Activated naive CD8-positive, alpha-beta T cell treated with anti-CD3 and anti-CD28 coated beads, Interleukin-2, amount 10 ng/mL, durations not matched to agents 7 days and 5 days (primary cell): ENCODE measurements at regions of chr12 and their contacts with region 1.

Region 1: GRCh38 chr12:55817346-55818139 is at the starts of genes ORMDL2 and SARNP:
- DNase-seq: peak; percentile 88
- ATAC-seq: peak; percentile 96
- H3K4me3 Mint-ChIP-seq: no peak within 1 kb of the TSS
- H3K27ac Mint-ChIP-seq: no peak within 1 kb of the TSS
- H3K4me1 Mint-ChIP-seq: peaks cover 35% of the 10 kb centered on the region
- H3K27me3 Mint-ChIP-seq: no peaks in the 10 kb centered on the region
- total RNA-seq, gene ORMDL2: 43.4 to 45.4 TPM
- total RNA-seq, gene SARNP: 80.6 to 82.4 TPM

Region 2: GRCh38 chr12:55582066-55582465 is 235.5 kb before region 1 on chr12:
- POLR2A ChIA-PET with region 1: no interaction called
- DNase-seq: no peak
- ATAC-seq: no peak
- H3K4me3 Mint-ChIP-seq: no peak overlapping the region
- H3K27ac Mint-ChIP-seq: no peak overlapping the region
- H3K4me1 Mint-ChIP-seq: no peaks in the 10 kb centered on the region
- H3K27me3 Mint-ChIP-seq: peaks cover 5% of the 10 kb centered on the region

Region 3: DNA sequence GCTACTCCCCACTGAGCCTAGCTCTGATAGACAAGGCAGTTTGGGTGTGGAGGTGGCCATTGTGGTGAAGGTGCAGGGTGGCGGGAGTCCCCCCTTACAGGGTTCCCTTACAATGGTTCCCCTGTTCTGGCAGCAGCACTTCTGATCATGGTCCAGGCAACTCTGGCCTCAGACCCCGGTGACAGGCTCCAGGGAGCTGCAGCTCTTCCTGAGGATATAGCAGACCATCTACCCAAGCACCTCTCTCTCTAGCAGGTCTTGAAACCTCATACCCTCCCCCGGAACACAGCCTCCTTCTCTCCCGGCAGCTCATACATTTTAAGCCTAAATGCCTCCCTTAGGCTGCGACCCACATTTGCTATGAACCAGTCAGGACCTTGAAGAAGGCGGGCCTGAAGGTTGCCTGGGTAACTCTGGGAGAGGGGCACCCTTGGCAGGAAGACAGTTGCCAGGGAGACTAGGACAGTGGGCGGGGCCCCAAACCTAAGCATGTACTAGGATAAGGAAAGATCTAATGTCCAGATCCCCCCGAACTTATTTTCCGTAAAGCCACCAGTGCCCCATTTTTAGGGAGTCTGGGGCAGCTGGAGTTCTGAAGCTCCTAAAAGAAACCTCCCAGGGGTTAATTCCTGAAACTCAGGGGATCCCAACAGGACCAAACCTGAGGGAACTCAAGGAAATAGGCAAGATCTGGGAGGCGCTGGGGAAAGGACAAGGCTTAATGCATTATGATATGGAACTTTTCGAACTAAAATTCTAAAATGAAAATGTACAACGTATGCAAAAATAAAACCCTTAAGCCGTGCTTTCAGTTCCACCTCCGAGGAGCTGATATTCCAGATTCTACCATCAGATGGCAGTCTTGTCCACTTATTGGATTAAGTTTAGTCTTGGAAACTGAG is 79.2 kb before region 1 on chr12:
- POLR2A ChIA-PET with region 1: interaction called, 10 read pairs
- DNase-seq: peak; percentile 73
- ATAC-seq: peak; percentile 74
- H3K4me3 Mint-ChIP-seq: peak overlapping the region; percentile 89
- H3K27ac Mint-ChIP-seq: peak overlapping the region; percentile 92
- H3K4me1 Mint-ChIP-seq: peaks cover 32% of the 10 kb centered on the region
- H3K27me3 Mint-ChIP-seq: peaks cover 4% of the 10 kb centered on the region

Region 4: DNA sequence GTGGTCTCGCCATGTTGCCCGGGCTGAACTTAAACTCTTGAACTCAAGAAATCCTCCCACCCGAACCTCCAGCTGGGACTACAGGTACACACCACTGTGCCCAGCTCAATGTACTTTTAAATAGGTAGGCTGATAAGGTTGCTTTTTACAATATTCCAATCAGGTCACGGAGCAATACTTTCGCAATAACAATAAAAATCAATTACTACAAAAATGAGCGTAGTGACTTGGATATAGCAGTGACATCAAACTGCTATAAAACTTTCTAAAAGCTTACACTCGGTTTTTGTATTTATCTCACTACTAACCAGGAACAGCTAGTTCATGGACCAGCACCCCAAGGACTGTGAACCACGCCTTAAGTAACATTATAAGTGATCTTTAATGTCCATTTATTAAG is 10.6 kb before region 1 on chr12:
- POLR2A ChIA-PET with region 1: interaction called, 11 read pairs
- DNase-seq: no peak
- ATAC-seq: no peak
- H3K4me3 Mint-ChIP-seq: no peak overlapping the region
- H3K27ac Mint-ChIP-seq: no peak overlapping the region
- H3K4me1 Mint-ChIP-seq: peaks cover 12% of the 10 kb centered on the region
- H3K27me3 Mint-ChIP-seq: no peaks in the 10 kb centered on the region

Region 5: GRCh38 chr12:55829967-55830600 is 12.5 kb after region 1 on chr12:
- POLR2A ChIA-PET with region 1: interaction called, 62 read pairs
- DNase-seq: no peak
- ATAC-seq: peak; percentile 41
- H3K4me3 Mint-ChIP-seq: peak overlapping the region; percentile 99
- H3K27ac Mint-ChIP-seq: peak overlapping the region; percentile 97
- H3K4me1 Mint-ChIP-seq: peaks cover 33% of the 10 kb centered on the region
- H3K27me3 Mint-ChIP-seq: no peaks in the 10 kb centered on the region

Region 6: DNA sequence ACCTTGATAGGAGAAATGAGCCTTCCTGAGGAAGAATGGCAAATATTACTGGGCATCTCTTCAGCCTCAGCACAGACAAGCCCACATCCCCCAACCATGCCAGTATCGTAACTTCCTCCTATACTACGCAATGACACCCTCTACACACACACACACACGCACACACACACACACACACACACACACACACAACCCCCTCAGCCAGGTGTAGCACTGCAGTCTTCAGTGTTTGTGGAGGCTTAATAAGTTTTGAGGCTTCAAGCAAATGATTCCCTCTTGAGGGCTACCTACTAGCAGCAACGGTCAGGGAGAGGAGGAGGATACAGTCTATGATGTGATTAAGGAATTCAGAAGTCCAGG is 115.0 kb after region 1 on chr12:
- POLR2A ChIA-PET with region 1: interaction called, 45 read pairs
- DNase-seq: no peak
- ATAC-seq: no peak
- H3K4me3 Mint-ChIP-seq: peak overlapping the region; percentile 98
- H3K27ac Mint-ChIP-seq: peak overlapping the region; percentile 98
- H3K4me1 Mint-ChIP-seq: peaks cover 49% of the 10 kb centered on the region
- H3K27me3 Mint-ChIP-seq: no peaks in the 10 kb centered on the region